Activated T-helper 1 cell treated with anti-CD3 and anti-CD28 coated beads, Interleukin-12 subunit alpha, Interleukin-12 subunit beta, Interleukin-2, Interleukin-4 antibody, amounts not matched to agents 30 ng/mL and 10 ng/mL and 1 ng/mL, durations not matched to agents 14 hours and 24 hours and 36 hours (primary cell): ENCODE measurements at regions of chr2 and their contacts with region 1.

Region 1: GRCh38 chr2:113756355-113757137 is at the start of gene SLC35F5:
- DNase-seq: peak; percentile 95
- H3K4me3 Mint-ChIP-seq: peak within 1 kb of the TSS; percentile 91
- H3K27ac Mint-ChIP-seq: peak within 1 kb of the TSS; percentile 99
- H3K4me1 Mint-ChIP-seq: peaks cover 23% of the 10 kb centered on the region
- H3K27me3 Mint-ChIP-seq: no peaks in the 10 kb centered on the region
- total RNA-seq, gene SLC35F5: 29.0 and 30.4 TPM in 2 replicates

Region 2: DNA sequence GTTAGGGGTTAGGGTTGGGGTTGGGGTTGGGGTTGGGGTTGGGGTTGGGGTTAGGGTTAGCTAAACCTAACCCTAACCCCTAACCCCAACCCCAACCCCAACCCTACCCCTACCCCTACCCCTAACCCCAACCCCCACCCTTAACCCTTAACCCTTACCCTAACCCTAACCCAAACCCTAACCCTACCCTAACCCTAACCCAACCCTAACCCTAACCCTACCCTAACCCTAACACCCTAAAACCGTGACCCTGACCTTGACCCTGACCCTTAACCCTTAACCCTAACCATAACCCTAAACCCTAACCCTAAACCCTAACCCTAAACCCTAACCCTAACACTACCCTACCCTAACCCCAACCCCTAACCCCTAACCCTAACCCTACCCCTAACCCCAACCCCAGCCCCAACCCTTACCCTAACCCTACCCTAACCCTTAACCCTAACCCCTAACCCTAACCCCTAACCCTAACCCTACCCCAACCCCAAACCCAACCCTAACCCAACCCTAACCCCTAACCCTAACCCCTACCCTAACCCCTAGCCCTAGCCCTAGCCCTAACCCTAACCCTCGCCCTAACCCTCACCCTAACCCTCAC is 153.6 kb before region 1 on chr2:
- intact Hi-C with region 1: loop called (anchors 2 kb)
- DNase-seq: no peak
- H3K4me3 Mint-ChIP-seq: peak overlapping the region; percentile 80
- H3K27ac Mint-ChIP-seq: no peak overlapping the region
- H3K4me1 Mint-ChIP-seq: peaks cover 5% of the 10 kb centered on the region
- H3K27me3 Mint-ChIP-seq: peaks cover 3% of the 10 kb centered on the region

Region 3: GRCh38 chr2:113700186-113700841 is 56.2 kb before region 1 on chr2:
- intact Hi-C with region 1: loop called (anchors 2 kb)
- DNase-seq: peak; percentile 19
- H3K4me3 Mint-ChIP-seq: peak overlapping the region; percentile 70
- H3K27ac Mint-ChIP-seq: peak overlapping the region; percentile 82
- H3K4me1 Mint-ChIP-seq: peaks cover 19% of the 10 kb centered on the region
- H3K27me3 Mint-ChIP-seq: no peaks in the 10 kb centered on the region

Region 4: GRCh38 chr2:113812204-113812603 is 55.7 kb after region 1 on chr2:
- intact Hi-C with region 1: loop called (anchors 5 kb)
- DNase-seq: no peak
- H3K4me3 Mint-ChIP-seq: no peak overlapping the region
- H3K27ac Mint-ChIP-seq: no peak overlapping the region
- H3K4me1 Mint-ChIP-seq: peaks cover 5% of the 10 kb centered on the region
- H3K27me3 Mint-ChIP-seq: peaks cover 3% of the 10 kb centered on the region

Region 5: DNA sequence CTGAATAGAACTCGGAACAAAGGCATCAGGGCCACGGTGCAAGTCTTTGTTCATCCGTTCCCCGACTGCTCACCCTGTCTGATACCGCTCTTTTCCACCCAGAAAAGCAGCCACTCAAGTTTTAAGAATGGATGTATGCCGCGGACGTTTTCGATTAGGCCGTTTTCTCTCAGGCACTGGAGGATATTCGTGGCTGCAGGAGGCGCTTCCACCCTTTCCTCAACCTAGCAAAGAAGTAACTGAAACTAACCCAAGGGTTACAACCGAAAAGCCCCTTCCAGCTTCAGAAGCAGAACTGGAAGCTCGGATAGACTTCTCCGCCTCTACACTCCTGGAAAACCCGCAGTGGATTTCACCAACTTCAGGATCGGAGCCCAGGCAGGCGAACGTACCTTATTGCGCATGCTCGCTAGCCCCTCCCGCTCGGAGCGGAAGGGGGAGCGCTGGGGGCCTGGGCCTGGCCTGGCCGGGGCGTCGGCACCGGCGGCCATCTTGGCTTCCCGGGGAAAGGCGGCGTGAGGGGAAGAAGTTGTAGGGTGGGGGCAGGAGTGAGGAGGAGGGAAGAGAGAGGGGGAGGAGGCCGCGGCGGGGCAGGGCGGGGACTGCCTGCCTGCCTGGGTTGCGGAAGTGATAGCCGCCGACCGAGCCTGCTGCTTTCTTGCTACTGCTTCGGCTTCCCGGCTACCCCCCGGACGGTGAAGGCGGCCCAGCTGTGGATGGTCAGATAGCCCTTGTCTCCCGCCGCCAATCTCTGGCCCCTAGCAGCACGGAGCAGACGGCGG is 133.1 kb after region 1 on chr2 and contains the start of gene ACTR3:
- intact Hi-C with region 1: loop called (anchors 1 kb)
- DNase-seq: peak; percentile 99
- H3K4me3 Mint-ChIP-seq: peak within 1 kb of the TSS; percentile 100
- H3K27ac Mint-ChIP-seq: peak within 1 kb of the TSS; percentile 99
- H3K4me1 Mint-ChIP-seq: peaks cover 84% of the 10 kb centered on the region
- H3K27me3 Mint-ChIP-seq: no peaks in the 10 kb centered on the region
- total RNA-seq, gene ACTR3: 440 and 451 TPM in 2 replicates